Aorta (tissue), 5 donors: ENCODE measurements at regions of chr13 and their contacts with region 1.

Region 1: GRCh38 chr13:99916366-99917103 is 55.0 kb downstream of the ZIC5 start:
- DNase-seq: no peak
- ATAC-seq: peak; percentile 82
- H3K4me3 ChIP-seq: no peak overlapping the region
- H3K27ac ChIP-seq: no peak overlapping the region
- H3K4me1 ChIP-seq: no peaks in the 10 kb centered on the region
- H3K27me3 ChIP-seq: no peaks in the 10 kb centered on the region

Region 2: DNA sequence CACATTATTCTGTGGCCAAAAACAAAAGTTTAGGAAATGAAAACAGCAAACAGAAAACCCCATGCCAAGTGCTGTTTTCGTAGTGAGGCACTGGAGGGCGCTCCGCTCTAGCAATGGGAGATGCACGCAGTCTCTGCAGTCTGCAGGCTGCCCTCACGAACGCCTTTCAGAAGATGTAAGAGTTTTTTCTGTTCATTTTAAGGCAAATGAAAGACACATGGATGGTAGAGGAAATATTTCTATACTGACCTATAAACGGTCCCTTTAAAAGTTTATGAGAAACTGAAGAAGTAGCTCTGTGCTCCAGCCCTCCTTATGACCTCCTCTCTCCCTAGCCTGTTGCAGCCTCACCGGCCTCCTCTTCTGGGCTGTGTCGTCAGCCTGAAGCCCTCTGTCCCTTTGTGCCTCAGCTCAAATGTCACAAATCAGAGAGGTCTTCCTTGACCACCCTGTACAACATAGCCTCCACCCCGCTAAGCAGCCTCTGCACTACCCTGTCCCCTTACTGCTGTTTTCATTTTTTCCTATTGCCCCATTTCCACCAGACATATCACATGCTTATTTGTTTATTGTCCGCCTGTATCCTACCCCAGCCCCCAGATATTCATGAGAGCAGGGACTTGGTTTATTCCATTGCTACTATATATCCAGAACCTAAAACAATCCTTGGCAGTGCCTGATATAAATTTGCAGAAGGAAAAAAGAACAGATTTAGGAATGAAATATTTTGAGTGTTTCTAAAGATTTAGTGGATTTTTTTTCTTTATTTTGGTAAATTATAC is 298.9 kb before region 1 on chr13:
- intact Hi-C with region 1: loop called in 1 of 2 experiments (anchors 5 kb)
- DNase-seq: peak; percentile 59 to 84
- ATAC-seq: peak; percentile 84
- H3K4me3 ChIP-seq: no peak overlapping the region
- H3K27ac ChIP-seq: no peak overlapping the region
- H3K4me1 ChIP-seq: no peaks in the 10 kb centered on the region
- H3K27me3 ChIP-seq: no peaks in the 10 kb centered on the region

Region 3: DNA sequence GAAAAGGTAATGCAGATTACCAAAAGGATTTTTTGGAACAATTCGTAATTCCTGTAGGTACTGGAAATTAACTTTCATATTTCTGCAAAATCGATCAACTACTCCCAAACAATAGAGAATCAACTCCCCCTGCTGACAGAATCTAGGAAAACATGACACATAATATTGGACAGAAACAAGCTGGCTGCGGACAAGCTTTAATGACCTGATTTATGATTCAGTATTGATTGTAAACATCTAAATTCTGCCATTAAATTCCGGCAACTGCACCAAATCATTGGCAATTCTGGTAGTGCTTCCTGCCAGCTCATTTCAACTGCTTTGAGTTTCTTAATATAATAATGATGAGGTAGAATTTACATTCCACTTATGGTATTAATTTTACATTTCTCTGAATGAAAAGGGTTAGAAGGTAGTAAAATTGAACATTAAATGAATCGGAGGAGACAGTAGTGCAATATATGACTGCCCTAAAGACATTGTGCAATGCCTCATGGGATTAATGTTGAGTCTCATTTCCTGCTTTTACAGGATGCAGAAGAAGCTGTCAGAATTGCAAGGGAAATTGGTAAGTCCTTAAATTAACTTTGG is 318.9 kb after region 1 on chr13:
- intact Hi-C with region 1: loop called in 1 of 2 experiments (anchors 5 kb)
- DNase-seq: no peak
- ATAC-seq: no peak
- H3K4me3 ChIP-seq: no peak overlapping the region
- H3K27ac ChIP-seq: no peak overlapping the region
- H3K4me1 ChIP-seq: no peaks in the 10 kb centered on the region
- H3K27me3 ChIP-seq: no peaks in the 10 kb centered on the region

Region 4: GRCh38 chr13:100514788-100515409 is 598.4 kb after region 1 on chr13:
- intact Hi-C with region 1: loop called (anchors 2 to 10 kb)
- DNase-seq: peak; percentile 81 to 91
- ATAC-seq: peak; percentile 94
- H3K4me3 ChIP-seq: no peak overlapping the region
- H3K27ac ChIP-seq: no peak overlapping the region
- H3K4me1 ChIP-seq: no peaks in the 10 kb centered on the region
- H3K27me3 ChIP-seq: no peaks in the 10 kb centered on the region

Region 5: GRCh38 chr13:100707818-100708740 is 791.5 kb after region 1 on chr13:
- intact Hi-C with region 1: no loop called
- DNase-seq: no peak
- ATAC-seq: no peak
- H3K4me3 ChIP-seq: no peak overlapping the region
- H3K27ac ChIP-seq: no peak overlapping the region
- H3K4me1 ChIP-seq: no peaks in the 10 kb centered on the region
- H3K27me3 ChIP-seq: no peaks in the 10 kb centered on the region